Sigmoid colon (tissue), 7 donors: ENCODE measurements at regions of chr10 and their contacts with region 1.

Region 1: GRCh38 chr10:34723750-34724149 is 91.3 kb downstream of the PARD3 start:
- DNase-seq: no peak
- H3K4me3 ChIP-seq: no peak overlapping the region
- H3K27ac ChIP-seq: peak overlapping the region in 3 of 4 donors; percentile 48 to 54 (median 50)
- H3K4me1 ChIP-seq: peaks cover 0 to 65% (median 46%) of the 10 kb centered on the region in 4 donors
- H3K27me3 ChIP-seq: no peaks in the 10 kb centered on the region
- CTCF ChIP-seq: peak in 3 of 4 experiments; percentile 51 to 66 (median 61)
- EP300 ChIP-seq: no peak
- POLR2A ChIP-seq: no peak

Region 2: DNA sequence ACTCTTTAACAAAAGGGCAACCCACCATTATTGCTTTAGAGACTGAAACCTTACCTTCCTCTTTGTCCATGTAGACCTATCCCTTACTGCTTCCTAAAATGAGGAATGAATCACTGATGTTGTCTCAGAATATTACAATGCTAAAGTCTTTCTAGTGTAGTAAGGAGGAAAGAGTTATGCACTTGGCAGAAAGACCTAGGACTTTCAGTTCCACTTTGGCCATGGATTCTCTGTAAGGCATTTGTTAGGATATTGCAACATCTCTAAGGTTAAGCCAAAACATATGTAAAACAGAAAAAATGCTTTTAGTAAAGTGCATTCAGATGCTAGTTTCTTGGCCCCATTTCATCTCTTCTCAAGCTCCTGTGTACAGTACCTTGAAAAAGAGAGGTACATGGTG is 139.6 kb before region 1 on chr10:
- intact Hi-C with region 1: no loop called
- DNase-seq: no peak
- H3K4me3 ChIP-seq: no peak overlapping the region
- H3K27ac ChIP-seq: peak overlapping the region in 3 of 4 donors; percentile 18 to 58 (median 38)
- H3K4me1 ChIP-seq: peaks cover 0 to 46% (median 26%) of the 10 kb centered on the region in 4 donors
- H3K27me3 ChIP-seq: no peaks in the 10 kb centered on the region
- CTCF ChIP-seq: no peak
- EP300 ChIP-seq: peak in 1 of 4 donors; percentile 67
- POLR2A ChIP-seq: no peak

Region 3: GRCh38 chr10:34815185-34816084 is 91.7 kb after region 1 on chr10 and contains the start of gene PARD3:
- intact Hi-C with region 1: loop called (anchors 5 kb)
- DNase-seq: peak; percentile 87
- H3K4me3 ChIP-seq: peak within 1 kb of the TSS; percentile 65 to 91 (median 88)
- H3K27ac ChIP-seq: peak within 1 kb of the TSS; percentile 85 to 95 (median 92)
- H3K4me1 ChIP-seq: peaks cover 0 to 46% (median 31%) of the 10 kb centered on the region in 4 donors
- H3K27me3 ChIP-seq: no peaks in the 10 kb centered on the region
- CTCF ChIP-seq: no peak
- EP300 ChIP-seq: no peak
- POLR2A ChIP-seq: no peak
- total RNA-seq, gene PARD3: 75.9 to 96.4 (median 83.7) TPM

Region 4: GRCh38 chr10:34985823-34986222 is 262.1 kb after region 1 on chr10:
- intact Hi-C with region 1: loop called (anchors 10 kb)
- DNase-seq: no peak
- H3K4me3 ChIP-seq: no peak overlapping the region
- H3K27ac ChIP-seq: no peak overlapping the region
- H3K4me1 ChIP-seq: no peaks in the 10 kb centered on the region
- H3K27me3 ChIP-seq: no peaks in the 10 kb centered on the region
- CTCF ChIP-seq: peak in 1 of 4 experiments; percentile 35
- EP300 ChIP-seq: no peak
- POLR2A ChIP-seq: no peak